ENCODE measurements at regions of chr9 and their contacts with region 1.

Region 1: GRCh38 chr9:123544007-123544827 is 188.2 kb downstream of the CRB2 start:
- DNase-seq: peak in 4 of 9 donors; percentile 3 to 11 (median 6)
- ATAC-seq: no peak
- H3K4me3 ChIP-seq: no peak overlapping the region
- H3K4me3 Mint-ChIP-seq: no peak overlapping the region
- H3K27ac ChIP-seq: no peak overlapping the region
- H3K27ac Mint-ChIP-seq: no peak overlapping the region
- H3K4me1 ChIP-seq: no peaks in the 10 kb centered on the region
- H3K4me1 Mint-ChIP-seq: peaks cover 0 to 6% (median 0%) of the 10 kb centered on the region in 7 donors
- H3K27me3 ChIP-seq: no peaks in the 10 kb centered on the region
- H3K27me3 Mint-ChIP-seq: no peaks in the 10 kb centered on the region

Region 2: DNA sequence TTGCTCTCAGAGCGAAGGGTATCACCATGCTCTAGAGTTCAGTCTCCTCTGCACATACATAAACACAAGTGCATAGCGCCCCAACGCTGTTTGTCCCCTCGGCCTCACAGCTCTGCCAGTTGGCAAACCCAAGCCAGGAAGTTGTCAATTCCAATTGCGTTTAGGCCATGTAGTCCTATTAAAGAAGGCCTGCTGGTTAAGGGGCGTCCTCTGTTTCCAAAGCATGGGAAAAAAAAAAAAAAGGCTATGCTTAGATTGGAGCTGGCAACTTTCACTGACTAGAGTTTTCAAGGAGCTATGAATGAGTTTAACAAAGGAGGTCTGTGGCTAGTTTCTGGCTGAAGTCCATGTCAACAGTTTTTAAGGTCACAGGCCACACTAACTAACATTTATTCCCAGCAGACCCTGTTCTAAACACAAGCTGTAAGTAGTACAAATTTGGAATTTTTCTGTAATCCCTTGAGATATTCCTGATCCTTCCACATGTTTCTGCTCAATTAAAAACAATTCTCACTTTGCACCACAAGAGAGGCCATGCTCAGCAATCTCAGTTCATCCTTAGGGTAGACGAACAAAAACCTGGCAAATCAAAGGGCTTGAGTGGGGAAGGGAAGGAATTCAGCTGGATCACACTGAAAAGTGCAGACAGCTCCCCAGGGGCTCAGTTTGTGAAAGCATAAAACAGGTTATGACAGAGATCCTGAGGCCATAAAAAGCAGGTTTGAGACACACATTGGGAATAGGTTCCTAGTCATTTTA is 198.0 kb after region 1 on chr9:
- CTCF ChIA-PET with region 1: no interaction called
- POLR2A ChIA-PET with region 1: no interaction called
- intact Hi-C with region 1: no loop called
- DNase-seq: no peak
- ATAC-seq: no peak
- H3K4me3 ChIP-seq: no peak overlapping the region
- H3K4me3 Mint-ChIP-seq: no peak overlapping the region
- H3K27ac ChIP-seq: no peak overlapping the region
- H3K27ac Mint-ChIP-seq: no peak overlapping the region
- H3K4me1 ChIP-seq: peaks cover 0 to 3% of the 10 kb centered on the region in 2 donors
- H3K4me1 Mint-ChIP-seq: peaks cover 0 to 6% (median 5%) of the 10 kb centered on the region in 7 donors
- H3K27me3 ChIP-seq: no peaks in the 10 kb centered on the region
- H3K27me3 Mint-ChIP-seq: no peaks in the 10 kb centered on the region

Region 3: GRCh38 chr9:123997665-123998277 is 453.6 kb after region 1 on chr9:
- CTCF ChIA-PET with region 1: no interaction called
- POLR2A ChIA-PET with region 1: no interaction called
- intact Hi-C with region 1: loop called in 1 of 2 experiments (anchors 5 kb)
- DNase-seq: peak in 1 of 9 donors; percentile 53
- ATAC-seq: peak; percentile 70
- H3K4me3 ChIP-seq: no peak overlapping the region
- H3K4me3 Mint-ChIP-seq: peak overlapping the region in 9 of 10 donors; percentile 45 to 97 (median 77)
- H3K27ac ChIP-seq: no peak overlapping the region
- H3K27ac Mint-ChIP-seq: peak overlapping the region in 1 of 9 donors; percentile 70
- H3K4me1 ChIP-seq: peaks cover 0 to 27% of the 10 kb centered on the region in 2 donors
- H3K4me1 Mint-ChIP-seq: peaks cover 24 to 38% (median 31%) of the 10 kb centered on the region in 7 donors
- H3K27me3 ChIP-seq: peaks cover 11 to 24% of the 10 kb centered on the region in 2 donors
- H3K27me3 Mint-ChIP-seq: peaks cover 76 to 85% (median 84%) of the 10 kb centered on the region in 5 donors

Region 4: GRCh38 chr9:124040935-124041816 is 497.0 kb after region 1 on chr9:
- CTCF ChIA-PET with region 1: interaction called, 4 read pairs
- POLR2A ChIA-PET with region 1: no interaction called
- intact Hi-C with region 1: loop called in 1 of 2 experiments (anchors 1 kb)
- DNase-seq: peak in 7 of 9 donors; percentile 16 to 69 (median 38)
- ATAC-seq: peak; percentile 69
- H3K4me3 ChIP-seq: no peak overlapping the region
- H3K4me3 Mint-ChIP-seq: peak overlapping the region in 7 of 10 donors; percentile 48 to 77 (median 57)
- H3K27ac ChIP-seq: no peak overlapping the region
- H3K27ac Mint-ChIP-seq: no peak overlapping the region
- H3K4me1 ChIP-seq: peaks cover 0 to 5% of the 10 kb centered on the region in 2 donors
- H3K4me1 Mint-ChIP-seq: peaks cover 0 to 25% (median 8%) of the 10 kb centered on the region in 7 donors
- H3K27me3 ChIP-seq: peaks cover 0 to 8% of the 10 kb centered on the region in 2 donors
- H3K27me3 Mint-ChIP-seq: peaks cover 61 to 82% (median 70%) of the 10 kb centered on the region in 5 donors